PC-3 (cell line): ENCODE measurements at regions of chr5 and their contacts with region 1.

Region 1: GRCh38 chr5:142713121-142713706 is 27.3 kb upstream of the FGF1 start:
- DNase-seq: peak; percentile 89
- ATAC-seq: peak; percentile 80
- H3K4me3 ChIP-seq: peak overlapping the region; percentile 90
- H3K27ac ChIP-seq: peak overlapping the region; percentile 38
- H3K4me1 ChIP-seq: peaks cover 12% of the 10 kb centered on the region; the same call in 1 of the 2 replicates
- H3K27me3 ChIP-seq: no peaks in the 10 kb centered on the region
- CTCF ChIP-seq: peak; percentile 97

Region 2: DNA sequence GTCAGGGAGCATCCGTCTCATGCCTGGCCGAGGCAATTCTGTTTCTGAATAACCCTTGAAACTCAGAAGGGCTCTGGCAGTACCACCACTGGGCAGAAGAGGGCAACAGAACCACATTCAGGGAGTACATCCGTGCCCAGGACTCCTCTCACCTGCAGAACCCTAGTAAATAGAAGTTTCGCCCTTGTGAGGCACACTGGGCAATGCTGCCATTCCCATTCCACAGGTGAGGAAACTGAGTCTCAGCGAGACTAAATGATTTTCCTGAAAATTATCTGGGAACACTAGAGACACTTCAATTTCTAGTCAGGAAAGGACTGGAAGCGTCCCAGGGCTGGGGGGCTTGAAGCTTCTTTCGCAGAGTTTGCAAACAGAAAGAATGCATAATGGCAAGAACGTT is 102.1 kb before region 1 on chr5:
- CTCF ChIA-PET with region 1: interaction called, 3 read pairs
- POLR2A ChIA-PET with region 1: no interaction called
- intact Hi-C with region 1: loop called (anchors 5 kb)
- DNase-seq: peak; percentile 68
- ATAC-seq: peak; percentile 93
- H3K4me3 ChIP-seq: no peak overlapping the region
- H3K27ac ChIP-seq: no peak overlapping the region
- H3K4me1 ChIP-seq: peaks cover 8% of the 10 kb centered on the region; the same call in 1 of the 2 replicates
- H3K27me3 ChIP-seq: no peaks in the 10 kb centered on the region
- CTCF ChIP-seq: peak; percentile 68

Region 3: DNA sequence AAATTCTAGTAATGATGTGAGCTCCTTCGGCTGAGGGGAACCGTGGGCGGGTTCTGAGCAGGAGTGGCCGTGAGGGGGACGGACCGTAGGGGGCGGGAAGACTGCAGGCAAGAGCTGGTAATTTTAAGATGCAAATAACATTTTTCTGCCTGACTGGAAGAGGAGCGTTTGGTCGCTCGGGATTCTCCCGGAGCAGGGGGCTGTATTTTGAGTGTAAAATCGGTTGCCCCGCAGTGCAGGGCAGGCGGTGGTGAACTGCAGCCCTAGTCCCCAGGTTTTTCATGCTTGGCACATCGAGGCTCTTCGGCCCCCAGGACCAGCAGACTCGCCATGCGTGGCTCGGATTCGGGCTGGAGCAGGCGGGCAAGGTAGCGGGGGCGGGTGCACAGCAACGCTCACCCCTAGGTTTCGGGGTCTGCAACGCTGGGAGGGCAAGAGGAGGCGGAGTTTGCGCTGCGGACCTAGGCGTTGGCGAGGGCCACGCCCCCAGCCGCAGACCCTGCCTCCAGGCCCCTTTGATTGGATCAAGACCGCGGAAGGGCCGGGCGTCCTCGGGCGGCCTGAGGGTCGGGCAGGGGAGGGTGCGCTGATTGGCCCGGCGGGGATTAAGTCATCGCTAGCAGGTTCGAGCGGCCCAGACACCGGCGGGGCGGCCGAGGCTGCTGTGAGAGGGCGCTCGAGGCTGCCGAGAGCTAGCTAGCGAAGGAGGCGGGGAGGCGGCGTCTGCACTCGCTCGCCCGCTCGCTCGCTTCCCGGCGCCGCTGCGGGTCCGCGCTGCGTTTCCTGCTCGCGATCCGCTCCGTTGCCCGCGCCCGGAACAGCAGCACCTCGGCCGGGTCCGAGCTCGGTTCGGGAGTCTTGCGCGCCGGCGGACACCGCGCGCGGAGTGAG is 56.8 kb after region 1 on chr5 and contains the start of gene ARHGAP26:
- CTCF ChIA-PET with region 1: interaction called, 3 read pairs
- POLR2A ChIA-PET with region 1: no interaction called
- intact Hi-C with region 1: loop called (anchors 2 kb)
- DNase-seq: peak; percentile 92
- ATAC-seq: peak; percentile 94
- H3K4me3 ChIP-seq: peak within 1 kb of the TSS; percentile 97
- H3K27ac ChIP-seq: peak within 1 kb of the TSS; percentile 29
- H3K4me1 ChIP-seq: peaks cover 19% of the 10 kb centered on the region
- H3K27me3 ChIP-seq: no peaks in the 10 kb centered on the region
- CTCF ChIP-seq: no peak
- total RNA-seq, gene ARHGAP26: 6.2 and 11.7 TPM in 2 replicates

Region 4: GRCh38 chr5:142845402-142845921 is 132.2 kb after region 1 on chr5:
- CTCF ChIA-PET with region 1: no interaction called
- POLR2A ChIA-PET with region 1: no interaction called
- intact Hi-C with region 1: no loop called
- DNase-seq: no peak
- ATAC-seq: peak; percentile 12; the same call in 1 of the 2 replicates
- H3K4me3 ChIP-seq: no peak overlapping the region
- H3K27ac ChIP-seq: peak overlapping the region; percentile 88
- H3K4me1 ChIP-seq: peaks cover 28% of the 10 kb centered on the region
- H3K27me3 ChIP-seq: no peaks in the 10 kb centered on the region
- CTCF ChIP-seq: no peak

Region 5: GRCh38 chr5:142881076-142881783 is 168.0 kb after region 1 on chr5:
- CTCF ChIA-PET with region 1: interaction called, 5 read pairs
- POLR2A ChIA-PET with region 1: no interaction called
- intact Hi-C with region 1: loop called (anchors 1 kb)
- DNase-seq: no peak
- ATAC-seq: no peak
- H3K4me3 ChIP-seq: no peak overlapping the region
- H3K27ac ChIP-seq: no peak overlapping the region
- H3K4me1 ChIP-seq: peaks cover 4% of the 10 kb centered on the region; the same call in 1 of the 2 replicates
- H3K27me3 ChIP-seq: no peaks in the 10 kb centered on the region
- CTCF ChIP-seq: no peak

Region 6: GRCh38 chr5:142888469-142889085 is 175.4 kb after region 1 on chr5:
- CTCF ChIA-PET with region 1: interaction called, 15 read pairs
- POLR2A ChIA-PET with region 1: no interaction called
- intact Hi-C with region 1: loop called (anchors 1 kb)
- DNase-seq: peak; percentile 74
- ATAC-seq: peak; percentile 78
- H3K4me3 ChIP-seq: no peak overlapping the region
- H3K27ac ChIP-seq: no peak overlapping the region
- H3K4me1 ChIP-seq: peaks cover 11% of the 10 kb centered on the region; the same call in 1 of the 2 replicates
- H3K27me3 ChIP-seq: no peaks in the 10 kb centered on the region
- CTCF ChIP-seq: peak; percentile 78

Region 7: DNA sequence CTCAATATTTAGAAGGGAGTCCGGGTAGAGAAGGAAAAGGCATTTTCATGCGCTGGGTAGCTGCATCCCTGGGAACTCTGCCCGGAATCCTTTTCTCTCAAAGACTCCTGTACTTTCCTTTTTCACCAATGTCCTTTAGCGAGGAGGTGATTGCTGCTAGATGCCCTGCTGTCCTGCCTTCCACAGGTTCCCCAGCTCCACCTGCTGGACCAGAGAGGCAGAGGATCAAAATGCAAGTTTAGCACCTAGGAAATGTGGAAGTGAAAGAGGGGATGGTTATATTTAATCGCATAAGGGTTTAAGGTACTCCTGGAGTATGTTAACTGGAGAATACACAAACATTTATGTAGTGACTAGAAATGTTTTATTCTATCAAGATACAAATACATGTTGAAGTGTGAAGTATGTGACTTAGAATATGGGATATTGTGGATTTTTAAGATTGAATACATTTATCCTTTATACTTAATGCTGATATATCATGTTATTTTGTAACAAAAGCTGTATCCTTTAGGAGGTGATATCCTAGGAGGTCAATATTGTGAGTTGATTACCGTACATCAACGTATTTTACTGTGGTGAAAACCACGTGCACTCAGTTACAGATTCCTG is 202.7 kb after region 1 on chr5:
- CTCF ChIA-PET with region 1: interaction called, 5 read pairs
- POLR2A ChIA-PET with region 1: no interaction called
- intact Hi-C with region 1: loop called (anchors 1 kb)
- DNase-seq: peak; percentile 63
- ATAC-seq: peak; percentile 81
- H3K4me3 ChIP-seq: no peak overlapping the region
- H3K27ac ChIP-seq: no peak overlapping the region
- H3K4me1 ChIP-seq: peaks cover 11% of the 10 kb centered on the region; the same call in 1 of the 2 replicates
- H3K27me3 ChIP-seq: no peaks in the 10 kb centered on the region
- CTCF ChIP-seq: peak; percentile 82

Region 8: GRCh38 chr5:144187699-144188294 is 1474.6 kb after region 1 on chr5:
- CTCF ChIA-PET with region 1: interaction called, 4 read pairs
- POLR2A ChIA-PET with region 1: no interaction called
- intact Hi-C with region 1: loop called (anchors 5 kb)
- DNase-seq: peak; percentile 79
- ATAC-seq: peak; percentile 61
- H3K4me3 ChIP-seq: no peak overlapping the region
- H3K27ac ChIP-seq: no peak overlapping the region
- H3K4me1 ChIP-seq: peaks cover 17% of the 10 kb centered on the region
- H3K27me3 ChIP-seq: no peaks in the 10 kb centered on the region
- CTCF ChIP-seq: no peak